T-cell (primary cell): ENCODE measurements at regions of chr1 and their contacts with region 1.

Region 1: GRCh38 chr1:20767271-20767670 is 19.8 kb downstream of the HP1BP3 start:
- DNase-seq: no peak
- ATAC-seq: no peak
- H3K4me3 ChIP-seq: no peak overlapping the region
- H3K4me3 Mint-ChIP-seq: no peak overlapping the region
- H3K27ac ChIP-seq: no peak overlapping the region
- H3K27ac Mint-ChIP-seq: no peak overlapping the region
- H3K4me1 ChIP-seq: no peaks in the 10 kb centered on the region
- H3K4me1 Mint-ChIP-seq: peaks cover under 1 to 5% (median 1%) of the 10 kb centered on the region in 3 donors
- H3K27me3 ChIP-seq: no peaks in the 10 kb centered on the region
- H3K27me3 Mint-ChIP-seq: no peaks in the 10 kb centered on the region

Region 2: GRCh38 chr1:20739225-20739624 is 28.0 kb before region 1 on chr1:
- CTCF ChIA-PET with region 1: interaction called in 1 of 2 experiments, 4 read pairs
- POLR2A ChIA-PET with region 1: interaction called in 1 of 2 experiments, 13 read pairs
- DNase-seq: no peak
- ATAC-seq: no peak
- H3K4me3 ChIP-seq: no peak overlapping the region
- H3K4me3 Mint-ChIP-seq: no peak overlapping the region
- H3K27ac ChIP-seq: no peak overlapping the region
- H3K27ac Mint-ChIP-seq: peak overlapping the region; percentile 39 to 49
- H3K4me1 ChIP-seq: no peaks in the 10 kb centered on the region
- H3K4me1 Mint-ChIP-seq: no peaks in the 10 kb centered on the region
- H3K27me3 ChIP-seq: no peaks in the 10 kb centered on the region
- H3K27me3 Mint-ChIP-seq: no peaks in the 10 kb centered on the region